ENCODE measurements at regions of chr2 and their contacts with region 1.

Region 1: GRCh38 chr2:85707304-85707703 is 13.1 kb downstream of the GNLY start:
- DNase-seq: peak; percentile 70
- H3K4me3 ChIP-seq: no peak overlapping the region
- H3K27ac ChIP-seq: no peak overlapping the region
- H3K4me1 ChIP-seq: peaks cover 0 to 4% of the 10 kb centered on the region in 2 experiments; a peak in 2 of 4 replicates
- H3K27me3 ChIP-seq: no peaks in the 10 kb centered on the region
- CTCF ChIP-seq: peak; percentile 95
- EP300 ChIP-seq: no peak
- RAD21 ChIP-seq: peak; percentile 69

Region 2: GRCh38 chr2:85577386-85578242 is 129.7 kb before region 1 on chr2 and contains the start of gene VAMP8:
- CTCF ChIA-PET with region 1: no interaction called
- POLR2A ChIA-PET with region 1: no interaction called
- DNase-seq: no peak
- H3K4me3 ChIP-seq: no peak within 1 kb of the TSS
- H3K27ac ChIP-seq: no peak within 1 kb of the TSS
- H3K4me1 ChIP-seq: no peaks in the 10 kb centered on the region
- H3K27me3 ChIP-seq: peaks cover 5% of the 10 kb centered on the region; the same call in 1 of the 2 replicates
- CTCF ChIP-seq: no peak
- EP300 ChIP-seq: no peak
- RAD21 ChIP-seq: no peak
- polyA plus RNA-seq, gene VAMP8: 0.72 and 1.3 TPM in 2 replicates

Region 3: GRCh38 chr2:85648619-85649018 is 58.7 kb before region 1 on chr2:
- CTCF ChIA-PET with region 1: interaction called, 16 read pairs
- POLR2A ChIA-PET with region 1: no interaction called
- DNase-seq: peak; percentile 49
- H3K4me3 ChIP-seq: no peak overlapping the region
- H3K27ac ChIP-seq: peak overlapping the region in 1 of 2 experiments; percentile 54; a peak in 2 of 4 replicates
- H3K4me1 ChIP-seq: peaks cover 0 to 12% of the 10 kb centered on the region in 2 experiments; a peak in 1 of 4 replicates
- H3K27me3 ChIP-seq: no peaks in the 10 kb centered on the region
- CTCF ChIP-seq: peak; percentile 66
- EP300 ChIP-seq: no peak
- RAD21 ChIP-seq: peak; percentile 36

Region 4: DNA sequence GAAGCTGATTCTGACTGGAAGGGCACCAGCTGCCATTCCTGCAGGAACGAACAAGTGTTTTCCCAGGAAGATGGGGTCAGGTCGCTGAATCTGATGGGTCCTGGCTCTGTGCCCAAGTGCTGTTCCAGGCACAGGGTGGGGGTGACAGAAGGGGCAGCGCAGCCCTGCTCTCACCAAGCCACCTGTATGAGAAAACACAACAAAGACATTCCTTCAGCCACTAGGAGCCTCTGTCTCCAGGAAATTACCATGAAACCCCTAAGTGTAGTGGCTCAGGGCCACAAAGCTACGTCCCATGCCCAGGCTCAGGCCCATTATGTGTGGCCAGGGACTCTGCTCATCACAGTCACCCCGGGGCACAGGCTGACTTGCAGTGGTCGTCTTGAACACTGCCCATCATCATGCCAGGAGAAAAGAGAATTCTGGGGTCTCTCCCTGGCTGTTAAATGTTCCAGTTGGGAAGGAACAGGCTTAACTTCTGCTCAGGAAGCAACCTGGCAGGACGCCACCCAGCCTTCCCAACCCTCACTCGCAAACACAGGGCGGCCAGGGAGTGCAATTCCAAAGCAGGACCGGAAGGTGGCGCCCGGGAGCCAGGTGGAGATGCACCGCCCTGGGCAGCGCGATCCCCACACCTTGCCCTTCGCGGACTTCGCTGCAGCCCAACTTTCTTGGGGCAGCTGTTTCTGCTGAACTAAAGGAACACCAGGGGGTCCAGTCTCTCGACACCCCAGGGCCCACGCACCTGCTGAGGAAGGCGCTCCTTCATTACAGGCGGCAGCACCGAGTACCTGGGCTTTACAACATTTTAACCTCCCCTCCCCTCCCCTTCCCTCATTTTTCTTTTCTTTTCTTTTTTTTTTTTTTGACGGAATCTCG is 28.3 kb before region 1 on chr2:
- CTCF ChIA-PET with region 1: interaction called, 63 read pairs
- POLR2A ChIA-PET with region 1: interaction called, 4 read pairs
- DNase-seq: peak; percentile 92
- H3K4me3 ChIP-seq: no peak overlapping the region
- H3K27ac ChIP-seq: no peak overlapping the region
- H3K4me1 ChIP-seq: peaks cover 0 to 7% of the 10 kb centered on the region in 2 experiments; a peak in 1 of 4 replicates
- H3K27me3 ChIP-seq: no peaks in the 10 kb centered on the region
- CTCF ChIP-seq: peak; percentile 93
- EP300 ChIP-seq: no peak
- RAD21 ChIP-seq: peak; percentile 82

Region 5: DNA sequence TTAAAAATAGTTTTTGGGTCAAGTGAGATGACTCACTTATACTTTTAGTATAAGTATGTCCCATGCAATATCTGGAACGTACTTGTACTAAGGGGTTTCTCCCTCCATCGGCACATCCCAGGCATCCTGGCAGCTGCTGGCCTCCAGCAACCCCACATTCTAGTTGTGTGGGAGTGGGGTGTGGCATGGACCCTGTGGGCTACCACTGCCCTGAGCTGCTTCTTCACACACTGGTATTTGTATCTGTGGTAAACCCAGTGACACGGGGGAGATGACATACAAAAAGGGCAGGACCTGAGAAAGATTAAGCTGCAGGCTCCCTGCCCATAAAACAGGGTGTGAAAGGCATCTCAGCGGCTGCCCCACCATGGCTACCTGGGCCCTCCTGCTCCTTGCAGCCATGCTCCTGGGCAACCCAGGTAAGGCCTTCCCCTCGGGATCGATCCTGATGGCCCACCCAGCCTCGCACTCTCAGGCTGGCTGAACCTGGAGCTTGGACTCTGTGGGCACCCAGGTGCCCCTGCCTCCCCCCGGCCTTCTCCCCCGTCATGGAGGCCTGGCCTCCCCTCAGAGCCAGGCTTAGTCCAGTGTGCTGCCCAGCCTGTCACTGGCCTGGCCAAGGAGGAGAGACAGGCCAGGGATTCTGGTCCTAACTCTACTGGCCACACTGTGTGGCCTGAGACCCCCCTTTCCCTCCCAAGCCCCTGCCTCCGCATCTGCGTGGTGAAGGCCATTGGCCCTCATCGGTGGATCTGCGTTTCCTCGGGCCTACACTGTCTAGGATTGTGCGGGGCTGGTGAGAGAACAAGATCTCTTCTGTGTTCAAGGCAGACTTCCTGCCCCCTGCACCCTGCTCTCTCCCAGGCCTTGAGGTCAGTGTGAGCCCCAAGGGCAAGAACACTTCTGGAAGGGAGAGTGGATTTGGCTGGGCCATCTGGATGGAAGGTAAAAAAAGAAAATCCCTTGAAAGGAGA is 13.0 kb before region 1 on chr2 and contains the start of gene GNLY:
- CTCF ChIA-PET with region 1: interaction called, 91 read pairs
- POLR2A ChIA-PET with region 1: no interaction called
- DNase-seq: no peak
- H3K4me3 ChIP-seq: no peak within 1 kb of the TSS
- H3K27ac ChIP-seq: no peak within 1 kb of the TSS
- H3K4me1 ChIP-seq: peaks cover 0 to 4% of the 10 kb centered on the region in 2 experiments; a peak in 1 of 4 replicates
- H3K27me3 ChIP-seq: no peaks in the 10 kb centered on the region
- CTCF ChIP-seq: no peak
- EP300 ChIP-seq: no peak
- RAD21 ChIP-seq: no peak
- polyA plus RNA-seq, gene GNLY: not detected in 2 replicates